ENCODE measurements at regions of chr19 and their contacts with region 1.

Region 1: GRCh38 chr19:39435499-39436349 is at the start of gene RPS16:
- DNase-seq: peak; percentile 100
- ATAC-seq: peak; percentile 87
- H3K4me3 ChIP-seq: peak within 1 kb of the TSS; percentile 29 to 58
- H3K27ac ChIP-seq: peak within 1 kb of the TSS; percentile 84
- H3K4me1 ChIP-seq: peaks cover 77% of the 10 kb centered on the region
- H3K27me3 ChIP-seq: no peaks in the 10 kb centered on the region
- CTCF ChIP-seq: no peak
- total RNA-seq, gene RPS16: 27,832 TPM

Region 2: GRCh38 chr19:39341719-39342604 is 93.8 kb before region 1 on chr19 and contains the start of gene SAMD4B:
- CTCF ChIA-PET with region 1: interaction called, 16 read pairs
- POLR2A ChIA-PET with region 1: interaction called, 22 read pairs
- in situ Hi-C with region 1: no loop called
- intact Hi-C with region 1: no loop called
- DNase-seq: peak; percentile 100
- ATAC-seq: peak; percentile 94
- H3K4me3 ChIP-seq: peak within 1 kb of the TSS; percentile 39 to 60
- H3K27ac ChIP-seq: peak within 1 kb of the TSS; percentile 88
- H3K4me1 ChIP-seq: peaks cover 40% of the 10 kb centered on the region
- H3K27me3 ChIP-seq: no peaks in the 10 kb centered on the region
- CTCF ChIP-seq: no peak
- total RNA-seq, gene SAMD4B: 1,339 TPM

Region 3: GRCh38 chr19:39406656-39407393 is 28.9 kb before region 1 on chr19 and contains the start of gene ZFP36:
- CTCF ChIA-PET with region 1: interaction called, 22 read pairs
- POLR2A ChIA-PET with region 1: interaction called, 524 read pairs
- in situ Hi-C with region 1: no loop called
- intact Hi-C with region 1: loop called (anchors 1 kb)
- DNase-seq: peak; percentile 100
- ATAC-seq: peak; percentile 37
- H3K4me3 ChIP-seq: peak within 1 kb of the TSS; percentile 42 to 55
- H3K27ac ChIP-seq: peak within 1 kb of the TSS; percentile 92
- H3K4me1 ChIP-seq: peaks cover 76% of the 10 kb centered on the region
- H3K27me3 ChIP-seq: no peaks in the 10 kb centered on the region
- CTCF ChIP-seq: no peak
- total RNA-seq, gene ZFP36: 414 TPM

Region 4: DNA sequence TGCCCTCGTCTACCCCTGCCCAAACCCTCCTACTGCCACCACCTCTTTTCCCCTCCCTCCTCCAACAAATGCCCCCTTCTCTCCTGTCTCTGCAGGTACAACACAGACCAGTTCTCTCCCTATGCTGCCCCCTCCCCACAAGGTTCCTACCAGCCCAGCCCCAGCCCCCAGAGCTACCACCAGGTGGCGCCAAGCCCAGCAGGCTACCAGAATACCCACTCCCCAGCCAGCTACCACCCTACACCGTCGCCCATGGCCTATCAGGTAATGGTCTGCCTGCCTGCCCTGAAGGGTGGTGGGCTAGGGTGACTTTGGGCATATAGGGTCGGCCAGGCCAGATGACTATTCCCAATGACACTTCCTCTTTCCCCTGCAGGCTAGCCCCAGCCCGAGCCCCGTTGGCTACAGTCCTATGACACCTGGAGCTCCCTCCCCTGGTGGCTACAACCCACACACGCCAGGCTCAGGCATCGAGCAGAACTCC is 38.5 kb after region 1 on chr19:
- CTCF ChIA-PET with region 1: interaction called, 91 read pairs
- POLR2A ChIA-PET with region 1: interaction called, 36 read pairs
- in situ Hi-C with region 1: no loop called
- intact Hi-C with region 1: no loop called
- DNase-seq: no peak
- ATAC-seq: peak; percentile 75
- H3K4me3 ChIP-seq: no peak overlapping the region
- H3K27ac ChIP-seq: no peak overlapping the region
- H3K4me1 ChIP-seq: no peaks in the 10 kb centered on the region
- H3K27me3 ChIP-seq: no peaks in the 10 kb centered on the region
- CTCF ChIP-seq: no peak

Region 5: GRCh38 chr19:39524495-39524894 is 88.8 kb after region 1 on chr19:
- CTCF ChIA-PET with region 1: interaction called, 49 read pairs
- POLR2A ChIA-PET with region 1: interaction called, 196 read pairs
- in situ Hi-C with region 1: no loop called
- intact Hi-C with region 1: no loop called
- DNase-seq: no peak
- ATAC-seq: peak; percentile 1; the same call in 1 of the 2 replicates
- H3K4me3 ChIP-seq: no peak overlapping the region
- H3K27ac ChIP-seq: no peak overlapping the region
- H3K4me1 ChIP-seq: peaks cover 3% of the 10 kb centered on the region; the same call in 1 of the 2 replicates
- H3K27me3 ChIP-seq: no peaks in the 10 kb centered on the region
- CTCF ChIP-seq: no peak

Region 6: DNA sequence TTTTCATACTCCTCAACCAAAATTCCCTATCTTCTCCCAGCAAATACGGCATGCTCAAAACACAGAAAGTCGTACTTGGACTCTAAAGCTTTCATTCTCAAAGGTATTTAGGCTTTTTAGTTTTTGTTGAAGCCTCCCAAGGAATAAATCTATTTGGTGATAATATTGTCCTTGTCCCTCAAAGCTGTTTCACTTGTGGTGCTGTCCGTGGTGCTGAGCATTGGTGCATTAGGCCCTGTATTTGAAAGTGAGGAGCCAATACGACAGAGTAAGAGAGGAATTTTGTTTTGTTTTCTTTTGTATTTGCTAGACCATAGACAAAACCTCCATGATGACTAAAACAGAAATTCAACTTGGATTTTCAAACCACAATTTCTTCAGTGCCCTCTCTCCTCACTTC is 163.4 kb after region 1 on chr19:
- CTCF ChIA-PET with region 1: no interaction called
- POLR2A ChIA-PET with region 1: no interaction called
- in situ Hi-C with region 1: no loop called
- intact Hi-C with region 1: no loop called
- DNase-seq: no peak
- ATAC-seq: no peak
- H3K4me3 ChIP-seq: no peak overlapping the region
- H3K27ac ChIP-seq: no peak overlapping the region
- H3K4me1 ChIP-seq: no peaks in the 10 kb centered on the region
- H3K27me3 ChIP-seq: peaks cover 88% of the 10 kb centered on the region
- CTCF ChIP-seq: 0 out of 2 replicates have a peak, but pooled peaks have one; percentile 1

Region 7: DNA sequence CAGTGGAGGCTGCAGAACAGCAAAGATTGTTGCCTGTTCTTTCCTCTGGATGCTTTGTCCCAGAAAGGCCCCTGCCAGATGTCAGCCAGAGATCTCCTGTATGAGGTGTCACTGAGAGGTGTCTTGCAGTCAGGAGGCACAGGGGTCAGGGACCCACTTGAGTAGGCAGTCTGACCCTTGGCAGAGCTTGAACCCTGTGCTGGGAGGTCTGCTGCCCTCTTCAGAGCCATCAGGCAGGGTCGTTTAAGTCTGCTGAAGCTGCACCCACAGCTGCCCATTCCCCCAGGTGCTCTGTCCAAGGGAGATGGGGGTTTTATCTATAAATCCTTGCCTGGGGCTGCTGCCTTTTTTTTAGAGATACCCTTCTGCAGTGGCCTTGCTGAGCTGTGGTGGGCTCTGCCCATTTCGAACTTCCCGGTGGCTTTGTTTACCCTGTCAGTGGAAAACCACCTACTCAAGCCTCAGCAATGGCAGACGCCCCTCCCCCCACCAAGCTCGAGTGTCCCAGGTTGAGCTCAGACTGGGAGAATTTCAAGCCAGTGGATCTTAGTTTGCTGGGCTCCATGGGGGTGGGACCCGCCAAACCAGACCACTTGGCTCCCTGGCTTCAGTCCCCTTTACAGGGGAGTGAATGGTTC is 188.0 kb after region 1 on chr19:
- CTCF ChIA-PET with region 1: interaction called, 8 read pairs
- POLR2A ChIA-PET with region 1: interaction called, 14 read pairs
- in situ Hi-C with region 1: no loop called
- intact Hi-C with region 1: no loop called
- DNase-seq: no peak
- ATAC-seq: no peak
- H3K4me3 ChIP-seq: no peak overlapping the region
- H3K27ac ChIP-seq: no peak overlapping the region
- H3K4me1 ChIP-seq: no peaks in the 10 kb centered on the region
- H3K27me3 ChIP-seq: peaks cover 60% of the 10 kb centered on the region
- CTCF ChIP-seq: no peak

Region 8: DNA sequence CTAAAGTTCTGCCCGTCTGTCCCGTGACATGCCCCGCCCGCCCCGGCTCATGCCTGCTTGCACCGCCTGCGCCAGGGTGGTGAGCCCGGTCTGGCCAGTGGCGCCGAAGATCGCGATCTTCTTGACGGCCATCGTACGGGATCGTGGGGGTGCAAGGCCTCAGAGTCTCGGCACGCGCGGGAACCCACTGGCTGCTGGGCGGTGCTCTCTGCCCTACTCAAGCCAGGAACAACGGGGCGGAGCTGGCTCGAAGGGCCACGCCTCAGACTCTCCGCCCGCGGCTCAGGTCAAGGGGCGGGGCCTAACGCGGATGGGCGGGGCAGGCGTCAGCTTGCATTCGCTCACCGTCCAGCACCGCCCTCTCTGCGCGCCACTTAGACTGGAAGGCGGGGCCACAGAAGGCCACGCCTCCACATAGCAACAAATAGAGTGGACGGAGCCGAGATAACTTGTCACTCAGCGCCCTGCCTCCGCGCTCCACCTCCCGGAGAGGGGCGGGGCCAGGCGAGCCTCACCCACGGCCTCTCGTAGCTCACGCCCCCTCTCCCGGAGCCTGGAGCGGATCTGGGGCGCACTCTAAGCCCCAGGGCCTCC is 1029.9 kb after region 1 on chr19 and contains the start of gene BLVRB:
- CTCF ChIA-PET with region 1: no interaction called
- POLR2A ChIA-PET with region 1: interaction called, 12 read pairs
- in situ Hi-C with region 1: no loop called
- intact Hi-C with region 1: no loop called
- DNase-seq: peak; percentile 92
- ATAC-seq: peak; percentile 96
- H3K4me3 ChIP-seq: peak within 1 kb of the TSS; percentile 68 to 82
- H3K27ac ChIP-seq: peak within 1 kb of the TSS; percentile 82
- H3K4me1 ChIP-seq: peaks cover 10% of the 10 kb centered on the region; the same call in 1 of the 2 replicates
- H3K27me3 ChIP-seq: no peaks in the 10 kb centered on the region
- CTCF ChIP-seq: no peak
- total RNA-seq, gene BLVRB: 45.6 TPM